ENCODE measurements at regions of chr11 and their contacts with region 1.

Region 1: DNA sequence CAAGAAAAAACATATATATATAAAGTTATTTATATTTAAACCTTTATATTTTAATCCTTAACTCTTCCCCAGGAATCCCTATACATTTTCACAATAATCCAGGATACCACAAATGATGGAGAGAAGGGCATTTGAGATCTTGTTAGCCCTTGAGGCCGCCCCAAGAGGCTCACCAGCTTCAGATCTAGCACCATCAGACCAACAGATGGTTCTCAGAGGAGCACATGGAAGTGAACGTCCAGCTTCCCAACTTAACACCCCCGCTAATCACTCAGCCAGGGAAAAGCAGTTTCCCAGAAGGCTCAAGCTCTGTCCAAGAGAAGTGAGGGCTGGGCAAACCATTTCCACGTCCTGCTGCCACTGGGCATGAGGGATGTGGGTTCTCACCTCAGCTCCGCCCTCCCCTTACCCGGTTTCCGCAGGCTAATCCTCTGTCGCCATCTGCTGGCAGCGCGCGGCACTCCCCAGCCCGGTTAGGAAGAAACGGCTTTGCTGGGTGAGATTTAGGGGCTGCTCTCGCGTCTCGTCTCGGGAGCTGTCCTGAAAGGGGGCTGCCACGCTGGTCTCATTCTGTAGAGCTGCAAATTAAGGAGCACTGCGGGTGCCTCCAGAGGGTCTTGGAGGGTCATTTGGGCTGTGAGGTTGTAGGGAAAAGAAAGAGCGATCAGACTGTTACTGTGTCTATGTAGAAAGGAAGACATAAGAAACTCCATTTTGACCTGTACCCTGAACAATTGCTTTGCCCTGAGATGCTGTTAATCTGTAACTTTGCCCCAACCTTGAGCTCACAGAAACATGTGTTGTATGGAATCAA is 6.8 kb upstream of the FAM111A start:
- DNase-seq: peak; percentile 73
- H3K4me3 Mint-ChIP-seq: no peak overlapping the region
- H3K27ac Mint-ChIP-seq: peak overlapping the region; percentile 24
- H3K4me1 Mint-ChIP-seq: peaks cover 6% of the 10 kb centered on the region
- H3K27me3 Mint-ChIP-seq: no peaks in the 10 kb centered on the region
- CTCF ChIP-seq: peak; percentile 98

Region 2: DNA sequence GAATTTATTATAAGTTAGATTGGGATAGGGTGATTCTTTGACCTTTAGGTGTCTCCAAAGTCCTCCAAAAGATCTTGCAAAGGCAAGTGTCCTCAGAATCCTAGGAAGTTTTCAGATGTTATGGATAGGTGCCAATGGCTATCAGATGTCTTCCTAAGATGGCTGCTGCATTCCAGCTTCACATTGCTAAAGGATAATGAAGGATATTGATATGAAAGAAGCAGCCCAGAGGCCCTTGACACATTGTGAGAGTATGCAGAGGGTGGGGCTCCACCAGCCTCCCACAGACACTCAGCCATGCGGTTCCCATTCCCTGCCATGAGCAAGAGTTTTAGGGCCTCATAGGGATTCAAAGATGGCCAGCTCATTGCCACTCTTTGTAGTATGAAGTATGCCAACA is 269.1 kb before region 1 on chr11:
- CTCF ChIA-PET with region 1: no interaction called
- POLR2A ChIA-PET with region 1: no interaction called
- intact Hi-C with region 1: no loop called
- DNase-seq: no peak
- H3K4me3 Mint-ChIP-seq: no peak overlapping the region
- H3K27ac Mint-ChIP-seq: no peak overlapping the region
- H3K4me1 Mint-ChIP-seq: no peaks in the 10 kb centered on the region
- H3K27me3 Mint-ChIP-seq: no peaks in the 10 kb centered on the region
- CTCF ChIP-seq: no peak

Region 3: GRCh38 chr11:59053387-59053786 is 82.5 kb before region 1 on chr11:
- CTCF ChIA-PET with region 1: interaction called, 14 read pairs
- POLR2A ChIA-PET with region 1: no interaction called
- intact Hi-C with region 1: loop called (anchors 1 kb)
- DNase-seq: peak; percentile 69
- H3K4me3 Mint-ChIP-seq: no peak overlapping the region
- H3K27ac Mint-ChIP-seq: no peak overlapping the region
- H3K4me1 Mint-ChIP-seq: peaks cover 7% of the 10 kb centered on the region
- H3K27me3 Mint-ChIP-seq: peaks cover 64% of the 10 kb centered on the region
- CTCF ChIP-seq: peak; percentile 71

Region 4: GRCh38 chr11:59106363-59107336 is 29.2 kb before region 1 on chr11 and contains the start of gene FAM111B:
- CTCF ChIA-PET with region 1: interaction called, 36 read pairs
- POLR2A ChIA-PET with region 1: interaction called, 3 read pairs
- intact Hi-C with region 1: no loop called
- DNase-seq: peak; percentile 96
- H3K4me3 Mint-ChIP-seq: peak within 1 kb of the TSS; percentile 90
- H3K27ac Mint-ChIP-seq: peak within 1 kb of the TSS; percentile 47
- H3K4me1 Mint-ChIP-seq: peaks cover 26% of the 10 kb centered on the region
- H3K27me3 Mint-ChIP-seq: no peaks in the 10 kb centered on the region
- CTCF ChIP-seq: no peak
- total RNA-seq, gene FAM111B: 0.74 and 1.6 TPM in 2 replicates

Region 5: GRCh38 chr11:59152312-59152951 is 16.6 kb after region 1 on chr11:
- CTCF ChIA-PET with region 1: interaction called, 146 read pairs
- POLR2A ChIA-PET with region 1: interaction called, 4 read pairs
- intact Hi-C with region 1: no loop called
- DNase-seq: no peak
- H3K4me3 Mint-ChIP-seq: no peak overlapping the region
- H3K27ac Mint-ChIP-seq: no peak overlapping the region
- H3K4me1 Mint-ChIP-seq: no peaks in the 10 kb centered on the region
- H3K27me3 Mint-ChIP-seq: no peaks in the 10 kb centered on the region
- CTCF ChIP-seq: no peak